ENCODE measurements at regions of chr14 and their contacts with region 1.

Region 1: DNA sequence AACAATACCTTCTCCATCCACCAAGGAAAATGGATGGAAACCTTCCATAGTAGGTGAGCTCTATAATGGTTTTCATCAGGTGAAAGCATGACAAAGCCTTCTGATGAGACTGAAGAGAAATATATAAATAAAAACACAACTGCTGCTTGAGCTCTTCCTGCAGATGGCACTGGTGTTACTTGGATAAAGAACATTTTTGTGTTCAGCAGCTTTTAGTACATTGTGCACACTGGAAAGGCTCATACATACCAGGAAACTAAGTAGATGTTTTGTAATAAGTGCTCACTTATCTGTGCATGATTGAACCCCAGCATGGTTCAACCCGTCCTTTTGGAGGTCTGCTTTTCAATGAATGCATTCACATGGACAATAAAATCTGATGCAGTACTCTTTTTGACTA is 357.3 kb upstream of the MIS18BP1 start:
- DNase-seq: peak; percentile 33
- H3K4me3 ChIP-seq: no peak overlapping the region
- H3K27ac ChIP-seq: no peak overlapping the region
- H3K4me1 ChIP-seq: no peaks in the 10 kb centered on the region
- H3K27me3 ChIP-seq: no peaks in the 10 kb centered on the region
- CTCF ChIP-seq: peak; percentile 45 to 64

Region 2: DNA sequence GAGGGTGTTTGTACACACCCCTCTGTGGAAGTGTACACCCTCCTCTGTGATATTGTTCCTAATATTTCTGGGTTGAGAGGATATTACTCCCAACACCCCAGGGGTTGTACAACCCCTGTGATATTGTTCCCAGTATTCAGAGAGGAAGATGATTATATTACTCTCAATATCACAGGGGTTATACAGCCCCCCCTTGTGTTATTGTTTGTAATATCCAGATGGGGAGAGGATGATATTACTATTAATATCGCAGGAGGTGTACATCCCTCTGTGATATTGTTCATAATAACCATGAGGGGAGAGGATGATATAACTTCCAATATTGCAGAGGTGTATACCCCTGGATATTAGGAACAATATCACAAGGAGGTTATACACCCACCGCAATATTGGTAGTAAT is 208.8 kb after region 1 on chr14:
- CTCF ChIA-PET with region 1: no interaction called
- dilution Hi-C with region 1: no loop called
- in situ Hi-C with region 1: loop called (anchors 25 kb)
- intact Hi-C with region 1: loop called (anchors 1 kb)
- DNase-seq: no peak
- H3K4me3 ChIP-seq: no peak overlapping the region
- H3K27ac ChIP-seq: no peak overlapping the region
- H3K4me1 ChIP-seq: no peaks in the 10 kb centered on the region
- H3K27me3 ChIP-seq: no peaks in the 10 kb centered on the region
- CTCF ChIP-seq: peak in 1 of 2 donors; percentile 31